Right ventricle myocardium inferior (tissue), 1 donor: ENCODE measurements at regions of chr17 and their contacts with region 1.

Region 1: GRCh38 chr17:43940630-43941029 is 1.6 kb downstream of the PPY start:
- DNase-seq: no peak
- ATAC-seq: peak; percentile 48

Region 2: GRCh38 chr17:43994272-43995149 is 53.9 kb after region 1 on chr17:
- intact Hi-C with region 1: loop called (anchors 1 kb)
- DNase-seq: peak; percentile 77
- ATAC-seq: peak; percentile 83

Region 3: GRCh38 chr17:44044067-44044466 is 103.4 kb after region 1 on chr17:
- intact Hi-C with region 1: loop called (anchors 10 kb)
- DNase-seq: no peak
- ATAC-seq: no peak

Region 4: GRCh38 chr17:44170499-44171201 is 230.0 kb after region 1 on chr17 and contains the start of gene ASB16:
- intact Hi-C with region 1: no loop called
- DNase-seq: no peak
- ATAC-seq: peak; percentile 78
- total RNA-seq, gene ASB16: 14.5 TPM